Mammary epithelial cell (primary cell): ENCODE measurements at regions of chr17 and their contacts with region 1.

Region 1: GRCh38 chr17:64975329-64976087 is 56.2 kb upstream of the LRRC37A3 start:
- DNase-seq: peak; percentile 94
- H3K4me3 ChIP-seq: peak overlapping the region; percentile 49 to 74 (median 62)
- H3K27ac ChIP-seq: peak overlapping the region; percentile 82
- H3K4me1 ChIP-seq: peaks cover 23% of the 10 kb centered on the region
- H3K27me3 ChIP-seq: no peaks in the 10 kb centered on the region
- CTCF ChIP-seq: no peak

Region 2: DNA sequence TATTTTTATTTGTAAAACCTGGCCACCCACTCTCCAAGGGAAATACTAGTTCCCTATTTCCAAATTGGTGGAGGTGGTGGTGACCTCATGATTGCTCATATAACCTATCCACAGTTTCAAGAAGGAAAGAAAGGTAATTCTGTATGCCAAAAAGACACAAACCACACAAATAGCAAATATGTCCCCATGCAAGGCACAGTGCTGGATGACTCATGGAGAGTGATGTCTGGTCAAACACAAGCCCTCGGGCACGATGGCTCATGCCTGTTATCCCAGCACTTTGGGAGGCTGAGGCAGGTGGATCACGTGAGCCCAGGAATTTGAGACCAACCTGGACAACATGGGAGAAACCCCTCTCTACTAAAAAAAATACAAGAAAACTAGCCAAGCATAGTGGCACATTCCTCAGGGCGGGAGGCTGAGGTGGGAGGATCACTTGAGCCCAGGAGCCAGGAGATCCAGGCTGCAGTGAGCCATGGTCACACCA is 16.9 kb after region 1 on chr17:
- CTCF ChIA-PET with region 1: no interaction called
- dilution Hi-C with region 1: no loop called
- in situ Hi-C with region 1: no loop called
- intact Hi-C with region 1: loop called (anchors 1 kb)
- DNase-seq: peak; percentile 98
- H3K4me3 ChIP-seq: no peak overlapping the region
- H3K27ac ChIP-seq: peak overlapping the region; percentile 57
- H3K4me1 ChIP-seq: peaks cover 31% of the 10 kb centered on the region
- H3K27me3 ChIP-seq: no peaks in the 10 kb centered on the region
- CTCF ChIP-seq: no peak

Region 3: GRCh38 chr17:65027305-65027704 is 51.8 kb after region 1 on chr17:
- CTCF ChIA-PET with region 1: no interaction called
- dilution Hi-C with region 1: no loop called
- in situ Hi-C with region 1: no loop called
- intact Hi-C with region 1: loop called (anchors 5 kb)
- DNase-seq: peak; percentile 74
- H3K4me3 ChIP-seq: no peak overlapping the region
- H3K27ac ChIP-seq: peak overlapping the region; percentile 51
- H3K4me1 ChIP-seq: peaks cover 20% of the 10 kb centered on the region
- H3K27me3 ChIP-seq: no peaks in the 10 kb centered on the region
- CTCF ChIP-seq: peak; percentile 30 to 36

Region 4: DNA sequence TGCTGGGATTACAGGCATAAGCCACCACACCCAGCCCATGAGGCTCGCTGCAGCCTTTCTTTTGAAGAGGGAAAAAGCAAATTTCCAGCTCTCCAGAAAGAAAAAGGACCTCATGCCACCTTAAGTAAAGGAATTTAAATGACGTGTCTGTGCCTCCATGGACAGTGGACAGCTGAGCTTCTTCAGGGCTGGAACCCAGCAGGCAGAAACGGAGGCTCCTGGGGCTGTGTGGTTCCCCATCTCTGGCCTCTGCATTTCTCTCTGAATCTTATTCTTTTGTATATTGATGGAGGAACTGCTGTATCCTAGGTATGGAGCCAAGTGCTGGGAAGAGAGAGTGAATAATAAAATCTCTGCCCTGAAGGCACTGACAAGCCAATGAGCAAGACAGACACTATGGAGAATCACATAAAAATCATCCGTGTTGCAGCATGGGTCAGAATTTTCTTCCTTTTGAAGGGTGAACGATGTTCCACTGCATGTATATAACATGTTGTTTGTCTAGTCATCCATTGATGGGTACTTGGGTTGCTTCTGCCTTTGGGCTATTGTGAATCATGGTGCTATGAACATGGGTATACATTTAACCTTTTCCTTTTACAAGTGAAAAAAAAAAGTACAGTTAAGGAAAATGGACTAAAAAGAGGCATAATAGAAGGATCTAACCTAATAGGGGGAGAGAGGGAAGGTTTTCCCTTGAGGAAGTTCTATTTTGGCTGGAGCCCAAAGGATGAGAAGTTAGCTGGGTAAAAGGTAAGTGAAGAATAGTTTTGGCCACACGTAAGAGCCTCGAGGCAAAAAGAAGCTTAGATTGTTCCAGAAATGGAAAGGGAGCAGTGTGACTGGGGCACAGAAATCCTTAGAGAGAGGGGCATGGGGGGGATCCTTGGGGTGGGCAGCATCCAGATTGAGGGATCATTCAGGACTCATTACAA is 113.2 kb after region 1 on chr17:
- CTCF ChIA-PET with region 1: interaction called, 12 read pairs
- dilution Hi-C with region 1: no loop called
- in situ Hi-C with region 1: no loop called
- intact Hi-C with region 1: no loop called
- DNase-seq: peak; percentile 74
- H3K4me3 ChIP-seq: no peak overlapping the region
- H3K27ac ChIP-seq: peak overlapping the region; percentile 54
- H3K4me1 ChIP-seq: peaks cover 23% of the 10 kb centered on the region
- H3K27me3 ChIP-seq: no peaks in the 10 kb centered on the region
- CTCF ChIP-seq: no peak